ENCODE measurements at regions of chr17 and their contacts with region 1.

Region 1: GRCh38 chr17:76623271-76624146 is 20.0 kb downstream of the ST6GALNAC1 start:
- DNase-seq: peak; percentile 80
- ATAC-seq: peak; percentile 90 to 92

Region 2: DNA sequence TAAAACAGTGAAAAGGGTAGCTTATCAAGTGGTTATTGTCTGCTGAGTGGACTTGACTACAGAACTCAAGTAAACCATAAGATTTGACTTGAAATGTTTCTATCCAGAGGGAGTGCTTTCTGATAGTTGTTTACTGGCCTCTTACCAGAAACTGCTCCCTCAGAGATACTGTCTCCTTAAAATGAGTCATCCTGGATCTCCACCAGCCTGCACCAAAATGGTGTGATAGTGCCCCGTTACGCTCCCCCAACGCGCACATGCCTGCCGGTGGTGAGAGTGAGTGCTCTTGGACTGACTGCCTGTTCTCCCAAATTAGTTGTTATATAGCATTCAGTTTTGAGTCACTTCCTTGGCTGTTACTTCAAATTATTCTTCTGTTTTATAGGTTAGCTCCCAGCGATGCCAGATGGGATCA is 60.8 kb before region 1 on chr17:
- intact Hi-C with region 1: loop called in 1 of 2 experiments (anchors 10 kb)
- DNase-seq: peak; percentile 67
- ATAC-seq: peak; percentile 75 to 86

Measured in left cardiac atrium (tissue), 4 donors.